Right ventricle myocardium inferior (tissue), 1 donor: ENCODE measurements at regions of chr13 and their contacts with region 1.

Region 1: DNA sequence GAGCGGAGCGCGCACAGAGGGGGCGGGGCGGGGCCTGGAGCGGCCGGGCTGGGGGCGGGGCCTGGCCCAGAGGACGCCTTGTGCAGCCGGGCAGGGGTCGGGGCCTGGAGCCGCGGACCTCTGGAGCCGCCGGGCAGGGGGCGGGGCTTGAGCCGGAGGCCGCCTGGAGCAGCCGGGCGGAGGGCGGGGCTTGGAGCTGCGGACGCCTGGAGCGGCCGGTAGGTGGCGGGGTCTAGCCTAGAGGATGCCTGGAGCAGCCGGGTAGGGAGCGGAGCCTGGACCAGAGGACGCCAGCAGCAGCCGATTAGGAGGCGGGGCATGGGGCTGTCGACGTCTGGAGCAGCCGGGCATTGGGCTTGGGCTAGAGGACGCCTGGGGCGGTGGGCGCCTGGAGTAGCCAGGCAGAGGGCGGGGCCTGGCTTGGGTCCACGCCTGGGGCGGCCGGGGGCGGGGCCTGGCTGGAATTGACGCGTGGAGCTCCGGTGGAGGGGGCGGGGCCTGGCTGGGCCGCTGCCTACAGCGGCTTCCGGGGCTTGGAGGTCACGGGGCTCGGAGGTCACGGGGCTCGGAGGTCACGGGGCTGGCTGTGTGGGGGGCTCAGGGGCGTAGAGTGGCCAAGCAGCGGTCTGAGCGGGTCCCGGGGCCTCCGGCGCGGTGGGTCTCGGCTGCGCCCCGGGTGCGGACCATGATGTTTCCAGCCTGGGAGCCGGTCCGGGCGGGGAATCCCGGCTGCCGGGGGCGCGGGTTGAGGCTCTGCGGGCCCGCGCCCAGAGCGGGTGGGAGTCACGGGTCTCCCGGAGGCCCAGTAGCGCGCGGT is at the start of gene ANKRD10:
- DNase-seq: peak; percentile 99
- ATAC-seq: peak; percentile 96
- total RNA-seq, gene ANKRD10: 48.6 TPM

Region 2: GRCh38 chr13:110715395-110716235 is 199.7 kb before region 1 on chr13:
- intact Hi-C with region 1: loop called (anchors 1 kb)
- DNase-seq: peak; percentile 99
- ATAC-seq: peak; percentile 78

Region 3: DNA sequence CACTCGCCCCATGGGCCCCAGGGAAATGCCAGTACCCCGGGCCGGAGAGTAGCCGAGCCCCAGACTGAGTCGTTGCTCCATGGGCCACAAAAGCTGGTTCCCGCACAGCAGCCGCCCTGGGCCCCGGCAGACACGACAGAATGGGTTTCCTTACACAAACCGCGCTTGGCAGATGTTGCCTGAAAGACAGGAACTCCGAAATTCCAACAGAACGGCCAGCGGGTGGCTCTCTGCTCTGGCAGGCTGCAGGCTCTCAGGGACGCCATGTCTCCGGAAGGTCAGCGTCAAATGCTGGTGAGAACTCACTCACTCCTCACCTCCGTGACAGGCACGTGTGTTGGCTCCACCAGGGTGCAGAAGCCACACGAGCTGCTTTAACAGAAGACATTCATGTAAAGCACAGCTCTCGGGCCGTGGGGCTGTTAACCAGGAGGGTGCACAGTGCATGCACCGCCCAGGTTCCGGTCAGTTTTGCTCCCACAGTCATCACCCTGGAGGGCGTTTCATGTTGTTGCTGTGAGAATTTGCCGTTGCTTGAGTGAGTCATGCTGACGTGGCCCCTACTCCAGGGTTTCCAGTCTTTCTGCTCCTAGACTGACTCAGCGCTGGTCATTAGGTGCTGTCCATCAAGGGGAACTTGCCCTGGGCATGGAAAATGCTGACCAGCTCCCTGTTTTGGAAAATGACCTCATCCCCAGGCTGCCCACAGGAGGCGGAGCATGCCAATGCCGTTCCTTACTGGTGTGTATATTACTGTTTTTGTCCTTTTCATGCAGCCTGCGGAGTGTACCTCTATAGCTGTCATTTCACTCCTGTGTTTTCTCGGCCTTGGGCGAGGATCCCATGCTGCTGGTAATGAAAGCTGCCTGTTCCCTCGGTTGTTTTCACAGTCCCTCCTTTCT is 45.2 kb before region 1 on chr13:
- intact Hi-C with region 1: loop called (anchors 1 kb)
- DNase-seq: peak; percentile 83
- ATAC-seq: peak; percentile 78

Region 4: GRCh38 chr13:111006506-111007031 is 91.3 kb after region 1 on chr13:
- intact Hi-C with region 1: loop called (anchors 2 kb)
- DNase-seq: peak; percentile 91
- ATAC-seq: peak; percentile 99

Region 5: DNA sequence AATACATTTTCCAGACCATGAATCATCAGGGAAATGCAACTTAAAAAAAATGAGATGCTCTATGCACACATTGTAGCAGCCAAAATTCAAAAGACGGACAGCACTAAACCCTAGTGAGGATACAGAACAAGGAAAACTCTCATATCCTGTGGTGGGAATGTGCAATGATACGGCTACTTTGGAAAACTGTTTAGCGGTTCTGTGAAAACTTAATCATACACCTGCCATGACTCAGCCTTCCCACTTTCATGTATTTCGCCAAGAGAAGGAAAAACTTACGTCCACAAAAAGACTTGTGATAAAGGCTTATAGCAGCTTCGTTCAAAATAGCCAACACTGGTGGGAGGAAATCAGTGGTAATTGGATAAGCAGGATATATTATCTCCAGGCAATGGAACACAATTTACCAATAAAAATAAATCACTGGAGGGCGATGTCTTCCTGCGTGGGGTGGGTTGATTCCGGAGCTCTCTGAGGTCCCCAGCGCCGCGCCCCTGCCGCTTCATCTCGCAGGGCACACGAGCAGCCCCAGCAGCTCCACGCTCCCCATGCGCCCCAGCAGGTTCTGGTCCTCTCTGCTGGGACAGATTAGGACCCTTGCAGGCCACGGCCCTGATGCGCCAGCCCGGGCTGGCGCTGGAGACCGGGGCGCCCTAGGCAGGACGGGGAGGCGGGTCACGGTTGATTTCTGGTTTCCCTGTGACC is 102.6 kb after region 1 on chr13:
- intact Hi-C with region 1: no loop called
- DNase-seq: no peak
- ATAC-seq: no peak

Region 6: DNA sequence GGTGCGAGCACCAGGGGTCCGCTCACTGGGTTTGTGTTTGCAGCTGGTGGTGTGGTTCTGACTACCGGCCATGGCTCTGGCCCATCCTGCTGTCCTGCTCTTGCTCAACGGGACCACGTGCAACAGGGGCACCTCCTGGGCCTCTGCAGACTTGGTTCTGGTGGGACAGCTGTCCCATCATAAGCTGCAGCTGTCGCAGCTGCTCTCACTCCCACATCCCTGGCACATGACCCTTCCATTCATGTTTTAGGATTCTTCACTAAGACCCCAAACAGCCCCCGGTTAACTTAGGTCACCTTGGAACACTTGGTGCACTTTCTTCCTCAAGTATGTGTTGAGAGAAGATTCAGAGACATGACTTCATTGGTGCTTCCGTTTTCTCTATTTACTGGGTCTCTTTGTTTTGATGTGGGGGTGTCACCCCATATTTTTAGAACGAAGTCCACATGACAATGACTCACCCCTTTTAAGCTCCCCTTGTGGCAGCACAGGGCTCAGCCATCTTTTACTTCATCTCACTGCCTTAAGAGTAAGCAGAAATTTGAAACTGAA is 131.4 kb after region 1 on chr13:
- intact Hi-C with region 1: loop called (anchors 2 kb)
- DNase-seq: no peak
- ATAC-seq: no peak

Region 7: GRCh38 chr13:111216166-111216960 is 301.1 kb after region 1 on chr13:
- intact Hi-C with region 1: loop called (anchors 5 kb)
- DNase-seq: no peak
- ATAC-seq: peak; percentile 71